ENCODE measurements at regions of chr3 and their contacts with region 1.

Region 1: DNA sequence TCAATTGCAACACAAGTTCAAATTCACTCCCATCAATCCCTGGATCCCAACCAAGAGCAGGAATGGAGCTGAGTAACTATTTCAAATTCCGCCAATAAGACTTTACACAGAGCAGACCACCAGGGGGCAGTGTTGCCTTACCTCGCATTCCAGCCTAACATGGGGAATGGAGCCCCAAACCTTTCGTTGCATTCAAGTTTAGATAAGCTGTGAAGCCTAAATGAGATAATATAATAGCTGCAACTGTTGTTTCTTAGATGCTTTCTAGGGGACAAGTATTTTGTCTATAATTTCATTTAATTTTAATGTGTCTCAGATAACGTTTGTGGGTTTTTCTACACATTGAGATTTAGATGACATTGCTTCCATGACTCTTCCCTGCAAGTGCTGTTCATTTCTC is 186.7 kb downstream of the NSUN3 start:
- DNase-seq: peak; percentile 73
- H3K4me3 Mint-ChIP-seq: no peak overlapping the region
- H3K27ac Mint-ChIP-seq: no peak overlapping the region
- H3K4me1 Mint-ChIP-seq: no peaks in the 10 kb centered on the region
- H3K27me3 Mint-ChIP-seq: peaks cover 9% of the 10 kb centered on the region

Region 2: GRCh38 chr3:94269763-94270162 is 20.2 kb after region 1 on chr3:
- CTCF ChIA-PET with region 1: interaction called, 18 read pairs
- POLR2A ChIA-PET with region 1: no interaction called
- intact Hi-C with region 1: no loop called
- DNase-seq: no peak
- H3K4me3 Mint-ChIP-seq: no peak overlapping the region
- H3K27ac Mint-ChIP-seq: no peak overlapping the region
- H3K4me1 Mint-ChIP-seq: no peaks in the 10 kb centered on the region
- H3K27me3 Mint-ChIP-seq: no peaks in the 10 kb centered on the region

Region 3: GRCh38 chr3:94481226-94481898 is 231.8 kb after region 1 on chr3:
- CTCF ChIA-PET with region 1: no interaction called
- POLR2A ChIA-PET with region 1: no interaction called
- intact Hi-C with region 1: no loop called
- DNase-seq: no peak
- H3K4me3 Mint-ChIP-seq: no peak overlapping the region
- H3K27ac Mint-ChIP-seq: no peak overlapping the region
- H3K4me1 Mint-ChIP-seq: no peaks in the 10 kb centered on the region
- H3K27me3 Mint-ChIP-seq: no peaks in the 10 kb centered on the region